ENCODE measurements at regions of chr4 and their contacts with region 1.

Region 1: GRCh38 chr4:14837860-14838259 is 164.4 kb upstream of the CPEB2 start:
- DNase-seq: no peak
- ATAC-seq: no peak

Region 2: GRCh38 chr4:14916554-14917297 is 78.9 kb after region 1 on chr4:
- intact Hi-C with region 1: loop called (anchors 5 kb)
- DNase-seq: peak; percentile 37
- ATAC-seq: peak; percentile 90